Heart left ventricle (tissue), 16 donors: ENCODE measurements at regions of chr17 and their contacts with region 1.

Region 1: DNA sequence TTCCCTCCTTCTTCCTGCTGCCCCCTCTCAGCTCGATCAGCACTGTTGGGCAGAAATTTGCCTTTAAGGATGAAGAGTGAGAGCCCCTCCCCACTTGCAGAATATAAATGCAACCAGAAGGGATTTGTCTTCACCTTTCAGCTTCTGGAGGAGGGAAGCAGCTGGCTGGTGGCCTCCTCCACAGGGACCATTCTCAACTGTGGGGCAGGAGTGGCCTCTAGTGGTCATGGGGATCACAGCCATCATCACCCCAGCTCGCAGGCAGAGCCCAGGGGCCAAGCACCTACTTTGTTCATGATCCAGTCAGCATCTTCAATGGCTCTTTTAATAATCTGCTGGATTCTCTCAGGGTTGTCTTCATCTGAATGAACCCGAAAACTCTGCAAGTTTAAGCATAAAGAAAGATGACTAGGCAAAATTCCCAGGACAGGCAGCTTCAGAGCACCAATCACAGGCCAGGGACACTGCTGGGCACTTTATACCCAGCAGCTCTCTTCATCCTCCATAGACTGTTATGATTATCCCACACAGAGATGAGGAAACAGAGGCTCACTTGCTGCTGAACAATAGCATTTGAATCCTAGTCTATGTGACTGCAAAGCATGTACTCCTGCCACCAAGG is 13.1 kb downstream of the LYRM9 start:
- DNase-seq: peak; percentile 66 to 85 (median 70)
- ATAC-seq: peak; percentile 85 to 96 (median 92)
- H3K4me3 ChIP-seq: no peak overlapping the region
- H3K27ac ChIP-seq: no peak overlapping the region
- H3K4me1 ChIP-seq: peaks cover 0 to 14% (median 1%) of the 10 kb centered on the region in 12 donors
- H3K27me3 ChIP-seq: no peaks in the 10 kb centered on the region
- CTCF ChIP-seq: peak; percentile 73 to 90 (median 83)
- POLR2A ChIP-seq: no peak

Region 2: GRCh38 chr17:27353461-27354050 is 526.5 kb before region 1 on chr17:
- intact Hi-C with region 1: loop called in 1 of 10 experiments (anchors 10 kb)
- DNase-seq: peak; percentile 95 to 97 (median 95)
- ATAC-seq: peak; percentile 92 to 97 (median 94)
- H3K4me3 ChIP-seq: peak overlapping the region; percentile 46 to 90 (median 66)
- H3K27ac ChIP-seq: peak overlapping the region; percentile 80 to 99 (median 96)
- H3K4me1 ChIP-seq: peaks cover 0 to 32% (median 21%) of the 10 kb centered on the region in 12 donors
- H3K27me3 ChIP-seq: no peaks in the 10 kb centered on the region
- CTCF ChIP-seq: peak; percentile 64 to 99 (median 98)
- POLR2A ChIP-seq: peak in 1 of 2 donors; percentile 81

Region 3: DNA sequence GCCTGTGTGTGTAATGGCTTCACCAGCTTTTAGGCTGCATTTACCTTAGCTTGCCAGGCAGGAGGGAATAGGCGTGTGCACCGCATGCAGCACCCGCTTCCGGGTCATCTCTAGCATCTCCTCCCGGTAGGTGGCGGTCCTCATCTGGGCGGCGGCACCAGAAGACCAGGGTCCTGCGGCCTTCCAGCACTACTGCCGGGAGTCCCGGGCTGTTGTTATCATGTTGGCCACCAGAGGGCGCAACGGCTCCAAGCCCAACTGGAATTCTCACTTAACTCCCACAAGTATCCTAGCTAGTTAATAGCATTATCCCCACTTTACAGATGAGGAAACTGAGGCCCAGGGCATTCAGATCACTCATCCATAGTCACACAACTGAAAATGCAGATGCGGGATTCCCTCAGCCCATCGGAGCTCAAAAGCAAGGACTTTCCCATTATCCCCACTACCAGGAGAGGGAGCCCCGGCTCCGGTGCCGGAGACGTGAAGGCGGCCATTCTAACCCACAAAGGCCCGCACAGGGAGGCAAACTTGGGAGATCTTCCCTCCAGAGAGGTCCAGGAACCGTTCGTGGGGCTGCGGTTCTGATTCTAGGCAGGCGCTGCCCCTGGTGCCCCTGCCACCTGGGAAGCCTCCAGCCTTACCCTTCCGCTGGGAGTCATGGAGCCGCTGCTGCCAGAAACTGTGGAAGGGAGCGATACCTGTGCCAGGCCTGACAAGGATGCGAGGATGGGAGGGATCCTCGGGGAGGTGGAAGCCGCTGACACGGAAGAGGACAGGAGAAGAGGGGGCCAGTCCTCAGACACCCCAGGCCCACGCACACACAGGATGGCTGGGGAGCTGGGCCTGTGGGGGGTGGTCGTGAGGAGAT is 225.2 kb before region 1 on chr17:
- intact Hi-C with region 1: loop called in 9 of 10 experiments (anchors 2 to 10 kb)
- DNase-seq: peak; percentile 50 to 82 (median 69)
- ATAC-seq: peak in 3 of 4 donors; percentile 35 to 46 (median 40)
- H3K4me3 ChIP-seq: no peak overlapping the region
- H3K27ac ChIP-seq: no peak overlapping the region
- H3K4me1 ChIP-seq: peaks cover 0 to 5% (median 0%) of the 10 kb centered on the region in 12 donors
- H3K27me3 ChIP-seq: no peaks in the 10 kb centered on the region
- CTCF ChIP-seq: peak; percentile 83 to 99 (median 92)
- POLR2A ChIP-seq: no peak

Region 4: DNA sequence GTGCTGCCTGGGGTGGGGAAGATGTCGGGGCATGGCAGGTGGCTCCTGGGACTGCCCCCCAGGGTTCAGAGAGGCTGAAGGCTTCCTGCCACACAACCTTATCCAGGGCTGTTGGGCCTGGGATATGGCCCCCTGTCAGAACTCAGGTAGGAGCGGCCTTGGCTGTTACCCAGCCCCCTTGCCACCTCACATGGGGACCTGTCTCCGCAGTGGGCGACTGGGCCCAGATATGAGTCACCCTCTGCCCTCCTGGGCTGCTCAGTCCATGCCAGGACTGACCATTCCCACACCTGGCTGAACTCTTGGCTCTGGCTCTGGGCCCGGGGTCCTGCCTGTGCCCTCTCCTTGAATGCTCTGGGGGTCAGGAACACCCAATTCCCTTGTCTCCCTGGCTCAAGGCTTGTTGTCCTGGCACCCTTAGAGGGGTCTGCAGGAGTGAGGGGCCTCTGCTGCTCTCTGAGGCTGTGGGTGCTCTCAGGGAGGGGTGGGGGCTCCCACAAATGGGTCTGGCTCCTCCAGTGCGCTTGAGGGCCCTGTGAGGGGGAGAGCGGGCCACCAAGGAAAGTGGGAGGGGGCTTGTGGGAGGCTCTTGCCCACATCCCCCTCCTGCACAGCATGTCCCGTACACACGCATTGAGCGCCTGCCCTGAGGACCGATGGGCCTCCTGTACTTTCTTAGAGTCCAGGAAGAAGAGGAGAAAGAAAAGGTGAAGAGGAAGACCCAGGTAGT is 213.1 kb before region 1 on chr17:
- intact Hi-C with region 1: loop called in 2 of 10 experiments (anchors 5 to 10 kb)
- DNase-seq: no peak
- ATAC-seq: no peak
- H3K4me3 ChIP-seq: no peak overlapping the region
- H3K27ac ChIP-seq: no peak overlapping the region
- H3K4me1 ChIP-seq: no peaks in the 10 kb centered on the region
- H3K27me3 ChIP-seq: no peaks in the 10 kb centered on the region
- CTCF ChIP-seq: no peak
- POLR2A ChIP-seq: no peak

Region 5: DNA sequence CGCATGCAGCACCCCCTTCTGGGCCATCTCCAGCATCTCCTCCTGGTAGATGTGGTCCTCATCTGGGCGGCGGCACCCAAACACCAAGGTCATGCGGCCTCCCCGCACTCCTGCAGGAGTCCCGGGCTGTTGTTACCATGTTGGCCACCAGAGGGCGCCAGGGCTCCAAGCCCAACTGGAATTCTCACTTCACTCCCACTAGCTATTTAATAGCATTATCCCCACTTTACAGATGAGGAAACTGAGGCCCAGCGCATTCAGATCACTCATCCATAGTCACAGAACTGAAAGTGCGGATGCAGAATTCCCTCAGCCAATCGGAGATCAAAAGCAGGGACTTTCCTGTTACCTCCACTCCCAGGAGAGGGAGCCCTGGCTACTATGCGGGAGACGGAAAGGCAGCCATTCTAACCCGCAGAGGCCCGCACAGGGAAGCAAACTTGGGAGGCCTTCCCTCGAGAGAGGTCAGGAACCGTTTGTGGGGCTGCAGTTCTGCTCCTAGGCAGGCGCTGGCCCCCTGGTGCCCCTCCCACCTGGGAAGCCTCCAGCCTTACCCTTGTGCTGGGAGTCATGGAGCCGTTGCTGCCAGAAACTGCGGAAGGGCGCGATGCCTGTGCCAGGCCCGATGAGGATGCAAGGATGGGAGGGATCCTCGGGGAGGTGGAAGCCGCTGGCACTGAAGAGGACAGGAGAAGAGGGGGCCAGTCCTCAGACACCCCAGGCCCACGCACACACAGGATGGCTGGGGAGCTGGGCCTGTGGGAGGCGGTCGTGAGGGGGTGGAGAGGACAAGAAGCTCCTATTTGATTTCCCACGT is 119.8 kb before region 1 on chr17:
- intact Hi-C with region 1: loop called in 9 of 10 experiments (anchors 1 to 2 kb)
- DNase-seq: peak; percentile 46 to 81 (median 65)
- ATAC-seq: peak in 3 of 4 donors; percentile 52 to 57 (median 55)
- H3K4me3 ChIP-seq: no peak overlapping the region
- H3K27ac ChIP-seq: no peak overlapping the region
- H3K4me1 ChIP-seq: no peaks in the 10 kb centered on the region
- H3K27me3 ChIP-seq: no peaks in the 10 kb centered on the region
- CTCF ChIP-seq: peak; percentile 76 to 95 (median 90)
- POLR2A ChIP-seq: no peak

Region 6: GRCh38 chr17:27793168-27793905 is 86.8 kb before region 1 on chr17:
- intact Hi-C with region 1: no loop called
- DNase-seq: peak; percentile 22 to 75 (median 43)
- ATAC-seq: peak in 3 of 4 donors; percentile 69 to 88 (median 73)
- H3K4me3 ChIP-seq: peak overlapping the region; percentile 7 to 57 (median 46)
- H3K27ac ChIP-seq: no peak overlapping the region
- H3K4me1 ChIP-seq: peaks cover 0 to 12% (median 9%) of the 10 kb centered on the region in 12 donors
- H3K27me3 ChIP-seq: peaks cover 0 to 27% (median 13%) of the 10 kb centered on the region in 9 donors
- CTCF ChIP-seq: peak in 1 of 12 donors; percentile 3
- POLR2A ChIP-seq: no peak

Region 7: GRCh38 chr17:27805520-27806146 is 74.5 kb before region 1 on chr17:
- intact Hi-C with region 1: loop called (anchors 1 to 2 kb)
- DNase-seq: peak; percentile 80 to 86 (median 82)
- ATAC-seq: peak; percentile 86 to 94 (median 91)
- H3K4me3 ChIP-seq: peak overlapping the region in 10 of 12 donors; percentile 16 to 51 (median 40)
- H3K27ac ChIP-seq: peak overlapping the region in 3 of 12 donors; percentile 41 to 53 (median 49)
- H3K4me1 ChIP-seq: peaks cover 0 to 31% (median 5%) of the 10 kb centered on the region in 12 donors
- H3K27me3 ChIP-seq: no peaks in the 10 kb centered on the region
- CTCF ChIP-seq: peak; percentile 70 to 89 (median 82)
- POLR2A ChIP-seq: no peak

Region 8: DNA sequence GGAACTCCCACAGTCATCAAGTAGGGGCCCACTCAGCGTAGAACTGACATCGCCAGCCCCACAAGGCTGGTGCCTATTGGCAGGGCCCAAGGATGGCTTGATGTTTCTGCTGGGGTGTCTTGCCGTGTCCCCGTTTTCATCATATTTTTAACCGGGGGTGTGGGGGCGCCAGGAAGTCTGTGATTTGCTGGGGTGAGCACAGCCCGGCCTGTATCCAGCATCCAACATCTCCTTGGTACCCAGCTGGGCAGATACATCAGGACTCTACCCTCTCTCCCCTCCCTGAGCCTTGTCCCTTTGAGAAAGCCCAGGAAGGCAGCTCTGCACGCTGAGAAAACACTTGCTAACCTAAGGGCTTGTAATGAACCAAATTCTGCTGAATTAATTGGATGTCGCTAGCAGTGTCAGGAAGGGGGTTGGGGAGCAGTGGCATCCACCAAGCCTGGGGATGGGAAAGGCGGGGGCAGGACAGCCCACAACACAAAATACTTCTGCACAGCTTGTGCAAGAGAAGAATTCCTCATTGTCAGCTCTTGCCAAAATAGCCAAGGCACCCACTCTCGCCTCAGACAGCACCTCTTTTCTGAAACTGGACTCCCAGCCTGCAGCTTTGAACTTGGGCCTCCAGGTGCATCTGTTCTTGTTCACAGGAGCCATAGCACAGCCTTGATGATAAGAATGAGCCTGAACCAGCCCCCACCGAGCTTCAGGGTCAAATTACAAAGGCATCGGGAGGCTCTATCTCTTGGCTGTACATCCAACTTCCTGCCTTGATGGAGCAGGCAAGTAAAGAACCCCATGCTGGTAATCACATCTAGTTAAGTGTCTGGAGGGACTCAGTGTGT is 76.7 kb after region 1 on chr17:
- intact Hi-C with region 1: no loop called
- DNase-seq: no peak
- ATAC-seq: peak in 1 of 4 donors; percentile 49
- H3K4me3 ChIP-seq: no peak overlapping the region
- H3K27ac ChIP-seq: no peak overlapping the region
- H3K4me1 ChIP-seq: peaks cover 0 to 7% (median 0%) of the 10 kb centered on the region in 12 donors
- H3K27me3 ChIP-seq: no peaks in the 10 kb centered on the region
- CTCF ChIP-seq: no peak
- POLR2A ChIP-seq: no peak

Region 9: DNA sequence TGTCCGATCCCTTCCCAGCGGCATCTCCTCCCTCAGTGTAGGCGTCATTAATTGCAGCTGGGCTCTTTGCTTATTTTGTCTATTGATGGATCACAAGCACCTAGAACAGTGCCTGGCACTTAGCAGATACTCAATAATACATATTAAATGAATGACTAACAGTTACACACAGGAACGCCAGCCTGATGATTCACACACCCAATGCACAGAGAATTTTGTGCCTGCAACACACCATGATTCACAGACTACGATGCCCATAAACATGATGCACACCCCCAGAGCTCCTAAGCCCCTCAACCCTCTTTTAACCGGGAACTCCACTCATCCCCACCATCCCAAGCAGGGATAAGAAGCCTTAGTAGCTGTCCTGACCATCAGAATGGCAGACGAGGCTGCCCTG is 372.3 kb after region 1 on chr17:
- intact Hi-C with region 1: loop called in 1 of 10 experiments (anchors 10 kb)
- DNase-seq: no peak
- ATAC-seq: no peak
- H3K4me3 ChIP-seq: no peak overlapping the region
- H3K27ac ChIP-seq: no peak overlapping the region
- H3K4me1 ChIP-seq: peaks cover 0 to 12% (median 8%) of the 10 kb centered on the region in 12 donors
- H3K27me3 ChIP-seq: peaks cover 0 to 28% (median 12%) of the 10 kb centered on the region in 9 donors
- CTCF ChIP-seq: no peak
- POLR2A ChIP-seq: no peak